ENCODE measurements at regions of chr4 and their contacts with region 1.

Region 1: GRCh38 chr4:82268050-82268825 is 105.6 kb downstream of the HNRNPD start:
- DNase-seq: peak; percentile 59
- ATAC-seq: peak; percentile 97
- H3K4me3 ChIP-seq: no peak overlapping the region
- H3K27ac ChIP-seq: no peak overlapping the region
- H3K4me1 ChIP-seq: no peaks in the 10 kb centered on the region
- H3K27me3 ChIP-seq: no peaks in the 10 kb centered on the region
- CTCF ChIP-seq: peak; percentile 81

Region 2: DNA sequence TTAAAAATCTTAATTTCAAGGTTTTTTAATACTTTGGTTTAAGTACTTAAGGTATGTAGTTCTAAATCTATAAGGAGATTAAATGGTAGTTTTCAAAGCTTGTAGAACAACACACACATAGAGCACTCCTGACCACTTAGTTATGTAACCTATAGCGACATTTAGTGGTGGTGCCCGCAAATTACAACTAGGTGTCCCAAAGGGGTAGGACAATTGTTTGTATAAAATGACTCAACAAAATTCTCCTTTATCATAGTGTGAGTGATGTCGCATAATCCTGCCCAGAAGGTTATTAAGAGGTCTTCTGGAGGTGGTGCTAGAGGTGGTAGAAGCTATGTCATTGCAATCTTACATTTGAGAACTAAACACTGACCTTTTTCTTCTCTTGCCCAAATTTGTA is 423.5 kb before region 1 on chr4:
- CTCF ChIA-PET with region 1: no interaction called
- POLR2A ChIA-PET with region 1: no interaction called
- intact Hi-C with region 1: loop called (anchors 5 kb)
- DNase-seq: peak; percentile 86
- ATAC-seq: peak; percentile 78
- H3K4me3 ChIP-seq: no peak overlapping the region
- H3K27ac ChIP-seq: no peak overlapping the region
- H3K4me1 ChIP-seq: no peaks in the 10 kb centered on the region; the same call in 1 of the 2 replicates
- H3K27me3 ChIP-seq: peaks cover 11% of the 10 kb centered on the region; the same call in 1 of the 2 replicates
- CTCF ChIP-seq: peak; percentile 82

Region 3: GRCh38 chr4:82232891-82233290 is 35.3 kb before region 1 on chr4:
- CTCF ChIA-PET with region 1: no interaction called
- POLR2A ChIA-PET with region 1: no interaction called
- intact Hi-C with region 1: no loop called
- DNase-seq: no peak
- ATAC-seq: no peak
- H3K4me3 ChIP-seq: no peak overlapping the region
- H3K27ac ChIP-seq: no peak overlapping the region
- H3K4me1 ChIP-seq: peaks cover 13% of the 10 kb centered on the region
- H3K27me3 ChIP-seq: no peaks in the 10 kb centered on the region
- CTCF ChIP-seq: no peak